ENCODE measurements at regions of chr1 and their contacts with region 1.

Region 1: GRCh38 chr1:79197421-79197820 is 190.9 kb upstream of the ADGRL4 start:
- DNase-seq: no peak
- ATAC-seq: no peak
- H3K4me3 ChIP-seq: no peak overlapping the region
- H3K27ac ChIP-seq: no peak overlapping the region
- H3K4me1 ChIP-seq: no peaks in the 10 kb centered on the region
- H3K27me3 ChIP-seq: no peaks in the 10 kb centered on the region
- CTCF ChIP-seq: no peak

Region 2: GRCh38 chr1:78839704-78840277 is 357.6 kb before region 1 on chr1:
- intact Hi-C with region 1: loop called in 1 of 2 experiments (anchors 5 kb)
- DNase-seq: peak in 1 of 4 donors; percentile 45
- ATAC-seq: peak; percentile 79
- H3K4me3 ChIP-seq: no peak overlapping the region
- H3K27ac ChIP-seq: no peak overlapping the region
- H3K4me1 ChIP-seq: no peaks in the 10 kb centered on the region
- H3K27me3 ChIP-seq: no peaks in the 10 kb centered on the region
- CTCF ChIP-seq: peak; percentile 57 to 65